ENCODE measurements at regions of chr21 and their contacts with region 1.

Region 1: DNA sequence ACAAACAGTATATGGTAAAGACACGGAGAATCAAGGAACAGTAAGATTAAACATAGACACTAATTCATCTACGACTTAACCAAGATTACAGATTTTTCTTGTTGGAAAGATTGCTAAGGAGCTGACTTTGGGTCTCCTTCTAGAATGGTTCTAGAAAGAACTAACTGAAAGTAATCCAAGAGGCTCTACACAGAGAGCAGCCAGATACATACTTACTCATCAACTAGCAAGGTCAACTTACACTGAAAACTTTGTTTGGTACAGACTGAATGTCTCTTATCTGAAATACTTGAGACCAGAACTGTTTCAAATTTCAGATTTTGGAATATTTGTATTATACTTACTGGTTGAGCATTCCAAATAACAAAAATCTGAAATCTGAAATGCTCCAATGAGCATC is 5.8 kb downstream of the C21orf91 start:
- DNase-seq: no peak
- ATAC-seq: no peak
- H3K4me3 ChIP-seq: 0 out of 2 replicates have a peak overlapping the region, but pooled peaks have one; percentile 2
- H3K27ac ChIP-seq: no peak overlapping the region
- H3K4me1 ChIP-seq: peaks cover 7% of the 10 kb centered on the region; the same call in 1 of the 2 replicates
- H3K27me3 ChIP-seq: no peaks in the 10 kb centered on the region
- CTCF ChIP-seq: no peak
- EP300 ChIP-seq: no peak
- POLR2A ChIP-seq: no peak
- RAD21 ChIP-seq: no peak

Region 2: GRCh38 chr21:17250778-17251241 is 562.5 kb before region 1 on chr21:
- CTCF ChIA-PET with region 1: no interaction called
- POLR2A ChIA-PET with region 1: no interaction called
- RAD21 ChIA-PET with region 1: no interaction called
- SMC1A ChIA-PET with region 1: no interaction called
- in situ Hi-C with region 1: no loop called
- intact Hi-C with region 1: no loop called
- DNase-seq: no peak
- ATAC-seq: no peak
- H3K4me3 ChIP-seq: no peak overlapping the region
- H3K27ac ChIP-seq: no peak overlapping the region
- H3K4me1 ChIP-seq: no peaks in the 10 kb centered on the region
- H3K27me3 ChIP-seq: no peaks in the 10 kb centered on the region
- CTCF ChIP-seq: no peak
- EP300 ChIP-seq: no peak
- POLR2A ChIP-seq: no peak
- RAD21 ChIP-seq: no peak

Region 3: DNA sequence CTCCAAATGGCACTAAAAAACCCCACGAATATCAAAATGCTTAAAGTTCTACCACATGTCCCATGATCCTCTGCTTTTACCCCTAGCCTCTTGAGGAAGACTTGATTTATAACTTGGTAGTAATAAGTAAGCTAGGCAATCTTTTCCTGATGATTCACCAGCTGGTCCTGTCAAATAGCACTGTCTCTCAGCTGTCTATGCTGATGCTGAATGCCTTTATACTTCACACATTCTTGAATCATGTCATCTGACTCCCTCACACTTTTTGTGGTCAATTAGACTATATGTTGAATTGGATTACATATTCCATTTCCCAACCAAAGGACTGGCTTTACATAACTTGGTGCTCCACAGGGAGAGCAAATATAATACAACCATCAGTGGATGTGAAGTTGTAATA is 10.8 kb before region 1 on chr21:
- CTCF ChIA-PET with region 1: interaction called, 6 read pairs
- POLR2A ChIA-PET with region 1: interaction called, 4 read pairs
- RAD21 ChIA-PET with region 1: interaction called, 14 read pairs
- SMC1A ChIA-PET with region 1: interaction called, 37 read pairs
- in situ Hi-C with region 1: no loop called
- intact Hi-C with region 1: no loop called
- DNase-seq: no peak
- ATAC-seq: no peak
- H3K4me3 ChIP-seq: no peak overlapping the region
- H3K27ac ChIP-seq: no peak overlapping the region
- H3K4me1 ChIP-seq: no peaks in the 10 kb centered on the region
- H3K27me3 ChIP-seq: no peaks in the 10 kb centered on the region
- CTCF ChIP-seq: no peak
- EP300 ChIP-seq: no peak
- POLR2A ChIP-seq: no peak
- RAD21 ChIP-seq: no peak